IMR-90 (cell line): ENCODE measurements at regions of chr3 and their contacts with region 1.

Region 1: GRCh38 chr3:99159220-99159762 is 257.8 kb upstream of the DCBLD2 start:
- DNase-seq: no peak
- ATAC-seq: no peak
- H3K4me3 ChIP-seq: no peak overlapping the region
- H3K27ac ChIP-seq: no peak overlapping the region
- H3K4me1 ChIP-seq: no peaks in the 10 kb centered on the region
- H3K27me3 ChIP-seq: no peaks in the 10 kb centered on the region
- CTCF ChIP-seq: no peak
- POLR2A ChIP-seq: no peak
- RAD21 ChIP-seq: no peak

Region 2: GRCh38 chr3:99724276-99724675 is 565.0 kb after region 1 on chr3:
- CTCF ChIA-PET with region 1: interaction called, 13 read pairs
- POLR2A ChIA-PET with region 1: no interaction called
- dilution Hi-C with region 1: no loop called
- in situ Hi-C with region 1: no loop called
- intact Hi-C with region 1: no loop called
- DNase-seq: no peak
- ATAC-seq: no peak; the same call in 1 of the 2 replicates
- H3K4me3 ChIP-seq: no peak overlapping the region
- H3K27ac ChIP-seq: no peak overlapping the region
- H3K4me1 ChIP-seq: peaks cover 11% of the 10 kb centered on the region
- H3K27me3 ChIP-seq: no peaks in the 10 kb centered on the region
- CTCF ChIP-seq: no peak
- POLR2A ChIP-seq: no peak
- RAD21 ChIP-seq: no peak

Region 3: DNA sequence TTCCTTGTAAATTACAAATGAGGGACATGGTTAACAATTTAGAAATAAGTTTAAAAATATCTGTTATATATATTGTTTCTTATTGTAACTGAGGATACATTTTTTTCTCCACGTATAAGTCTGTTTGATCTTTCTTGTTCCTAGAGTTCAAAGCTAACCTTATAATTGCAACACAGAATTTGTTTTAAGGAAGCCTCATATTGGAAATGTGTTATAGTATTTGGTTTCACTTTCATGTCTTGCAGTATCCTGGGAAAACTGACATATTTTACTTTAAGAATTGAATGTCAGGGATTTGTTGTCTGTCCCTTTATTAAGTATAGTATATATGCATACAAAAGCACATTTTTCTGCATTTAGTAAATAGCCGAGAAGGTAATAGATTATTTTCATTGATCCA is 1151.7 kb after region 1 on chr3:
- CTCF ChIA-PET with region 1: no interaction called
- POLR2A ChIA-PET with region 1: no interaction called
- dilution Hi-C with region 1: no loop called
- in situ Hi-C with region 1: no loop called
- intact Hi-C with region 1: no loop called
- DNase-seq: no peak
- ATAC-seq: no peak
- H3K4me3 ChIP-seq: no peak overlapping the region
- H3K27ac ChIP-seq: no peak overlapping the region
- H3K4me1 ChIP-seq: peaks cover 6% of the 10 kb centered on the region; the same call in 1 of the 2 replicates
- H3K27me3 ChIP-seq: no peaks in the 10 kb centered on the region
- CTCF ChIP-seq: no peak
- POLR2A ChIP-seq: no peak
- RAD21 ChIP-seq: no peak